ENCODE measurements at regions of chr1 and their contacts with region 1.

Region 1: GRCh38 chr1:104780470-104781078 is 1030.9 kb downstream of the AMY1C start:
- DNase-seq: peak; percentile 60
- CTCF ChIP-seq: peak; percentile 64

Region 2: DNA sequence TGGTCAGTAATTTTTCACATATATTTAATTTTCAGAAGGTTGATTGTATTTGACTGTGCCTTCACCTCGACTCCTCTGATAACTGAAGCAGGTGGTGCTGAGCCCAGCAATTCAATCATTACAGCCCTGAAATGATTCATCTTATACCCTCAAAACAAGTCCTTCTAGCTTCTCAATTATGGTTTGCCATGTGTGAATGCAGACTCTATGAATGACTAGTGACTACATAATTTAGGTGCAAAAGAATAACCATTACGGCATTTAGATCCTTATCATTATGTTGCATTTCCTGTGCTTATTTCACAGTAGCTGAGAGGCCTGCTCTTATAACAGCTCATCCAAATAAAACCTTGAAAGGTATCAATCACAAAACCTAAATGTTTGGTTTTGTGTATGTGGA is 1618.2 kb before region 1 on chr1:
- in situ Hi-C with region 1: no loop called
- DNase-seq: no peak
- CTCF ChIP-seq: no peak

Region 3: GRCh38 chr1:105793536-105794146 is 1013.1 kb after region 1 on chr1:
- in situ Hi-C with region 1: loop called (anchors 25 kb)
- DNase-seq: peak; percentile 46
- CTCF ChIP-seq: peak; percentile 60

Measured in GM13976 (cell line).